Common myeloid progenitor, CD34-positive (primary cell): ENCODE measurements at regions of chr9 and their contacts with region 1.

Region 1: GRCh38 chr9:133792721-133793470 is 54.7 kb upstream of the SARDH start:
- DNase-seq: peak in 2 of 3 donors; percentile 46 to 48
- H3K4me3 ChIP-seq: peak overlapping the region in 4 of 7 experiments; percentile 14 to 57 (median 39)
- H3K27ac ChIP-seq: no peak overlapping the region
- H3K4me1 ChIP-seq: peaks cover 0 to 32% (median 29%) of the 10 kb centered on the region in 4 experiments
- H3K27me3 ChIP-seq: peaks cover 0 to 10% (median 2%) of the 10 kb centered on the region in 5 experiments

Region 2: DNA sequence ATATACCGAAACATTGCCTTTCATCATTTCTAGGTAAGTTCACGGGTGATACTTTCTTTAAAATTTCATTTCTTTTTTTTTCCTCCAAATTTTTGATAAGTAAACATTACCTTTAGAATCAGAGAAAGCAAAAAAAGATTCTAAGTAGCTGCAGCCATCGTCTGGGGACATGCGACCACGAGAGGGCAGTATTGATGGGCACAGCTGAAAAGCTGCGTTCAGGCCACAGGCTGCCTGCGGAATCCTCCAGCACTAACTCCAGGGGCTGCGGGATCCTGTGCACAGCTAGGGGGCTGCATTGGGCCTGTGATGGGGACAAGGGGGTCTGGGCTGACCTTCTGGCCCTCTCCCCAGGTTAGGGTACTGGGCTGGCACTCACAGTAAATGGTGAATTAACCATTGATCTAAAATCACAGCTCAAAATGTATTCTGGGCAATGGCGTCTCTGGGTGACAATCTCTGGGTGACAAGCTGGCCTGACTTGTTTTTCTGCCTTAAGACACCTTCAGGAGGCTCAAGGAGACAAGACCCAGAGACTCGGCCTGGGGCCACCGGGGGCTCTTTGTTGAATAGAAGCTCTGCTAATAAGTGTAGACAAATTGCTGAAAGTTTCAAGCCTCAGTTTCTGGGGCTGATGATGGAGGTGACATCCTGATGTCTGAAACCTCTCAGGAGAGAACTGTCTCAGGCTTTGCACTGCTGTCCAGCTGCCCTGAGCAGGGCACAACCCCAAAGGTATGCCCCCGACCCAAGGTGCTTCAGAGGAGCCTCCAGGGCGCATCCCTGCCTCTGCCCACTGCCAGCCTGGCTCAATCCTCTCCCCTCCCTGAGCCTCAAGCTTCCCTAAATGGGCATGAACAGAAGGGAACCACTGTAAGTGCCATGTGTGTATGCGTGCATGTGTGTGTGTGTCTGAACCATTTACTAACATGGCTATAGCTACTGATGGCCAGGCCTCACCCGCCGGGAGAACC is 10.5 kb before region 1 on chr9:
- CTCF ChIA-PET with region 1: interaction called, 32 read pairs
- POLR2A ChIA-PET with region 1: interaction called, 3 read pairs
- DNase-seq: peak; percentile 73 to 91 (median 83)
- H3K4me3 ChIP-seq: no peak overlapping the region
- H3K27ac ChIP-seq: no peak overlapping the region
- H3K4me1 ChIP-seq: peaks cover 0 to 15% (median 3%) of the 10 kb centered on the region in 4 experiments
- H3K27me3 ChIP-seq: peaks cover 0 to 9% (median 0%) of the 10 kb centered on the region in 5 experiments

Region 3: GRCh38 chr9:133803028-133803585 is 10.2 kb after region 1 on chr9:
- CTCF ChIA-PET with region 1: interaction called, 13 read pairs
- POLR2A ChIA-PET with region 1: interaction called, 3 read pairs
- DNase-seq: no peak
- H3K4me3 ChIP-seq: no peak overlapping the region
- H3K27ac ChIP-seq: no peak overlapping the region
- H3K4me1 ChIP-seq: no peaks in the 10 kb centered on the region
- H3K27me3 ChIP-seq: no peaks in the 10 kb centered on the region